B cell (primary cell): ENCODE measurements at regions of chrX and their contacts with region 1.

Region 1: GRCh38 chrX:107776649-107777535 is 641 bp upstream of the NCBP2L start:
- DNase-seq: peak; percentile 85
- ATAC-seq: peak; percentile 70
- H3K4me3 ChIP-seq: peak overlapping the region; percentile 48 to 72 (median 60)
- H3K4me3 Mint-ChIP-seq: peak overlapping the region; percentile 84
- H3K27ac ChIP-seq: peak overlapping the region in 1 of 2 donors; percentile 12
- H3K27ac Mint-ChIP-seq: peak overlapping the region; percentile 79
- H3K4me1 ChIP-seq: peaks cover 14 to 23% of the 10 kb centered on the region in 2 donors
- H3K4me1 Mint-ChIP-seq: peaks cover 21% of the 10 kb centered on the region
- H3K27me3 ChIP-seq: peaks cover 0 to 9% (median 0%) of the 10 kb centered on the region in 4 experiments
- H3K27me3 Mint-ChIP-seq: no peaks in the 10 kb centered on the region
- CTCF ChIP-seq: peak; percentile 63

Region 2: DNA sequence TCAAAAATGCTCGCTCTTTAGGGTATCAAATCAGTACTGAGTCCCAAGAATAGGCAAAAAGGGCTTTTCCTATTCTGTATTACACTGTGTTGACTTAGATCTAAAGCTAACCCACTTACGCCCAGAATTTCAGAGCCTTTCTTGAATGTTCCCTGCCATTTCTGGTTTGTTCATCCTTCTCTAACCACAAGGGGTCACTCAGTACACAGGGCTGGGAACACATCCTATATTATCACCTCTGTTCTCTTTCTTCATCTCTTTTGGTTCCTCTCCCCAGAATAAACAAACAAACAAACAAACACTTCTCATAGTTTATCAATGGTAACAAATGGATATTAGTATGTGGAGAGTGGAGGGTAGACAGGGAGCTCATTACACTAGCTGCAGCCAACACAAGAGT is 751.3 kb before region 1 on chrX:
- CTCF ChIA-PET with region 1: interaction called, 4 read pairs
- POLR2A ChIA-PET with region 1: no interaction called
- intact Hi-C with region 1: loop called (anchors 2 kb)
- DNase-seq: peak; percentile 24
- ATAC-seq: no peak
- H3K4me3 ChIP-seq: no peak overlapping the region
- H3K4me3 Mint-ChIP-seq: no peak overlapping the region
- H3K27ac ChIP-seq: no peak overlapping the region
- H3K27ac Mint-ChIP-seq: no peak overlapping the region
- H3K4me1 ChIP-seq: no peaks in the 10 kb centered on the region
- H3K4me1 Mint-ChIP-seq: no peaks in the 10 kb centered on the region
- H3K27me3 ChIP-seq: no peaks in the 10 kb centered on the region
- H3K27me3 Mint-ChIP-seq: peaks cover 12% of the 10 kb centered on the region
- CTCF ChIP-seq: peak; percentile 28

Region 3: DNA sequence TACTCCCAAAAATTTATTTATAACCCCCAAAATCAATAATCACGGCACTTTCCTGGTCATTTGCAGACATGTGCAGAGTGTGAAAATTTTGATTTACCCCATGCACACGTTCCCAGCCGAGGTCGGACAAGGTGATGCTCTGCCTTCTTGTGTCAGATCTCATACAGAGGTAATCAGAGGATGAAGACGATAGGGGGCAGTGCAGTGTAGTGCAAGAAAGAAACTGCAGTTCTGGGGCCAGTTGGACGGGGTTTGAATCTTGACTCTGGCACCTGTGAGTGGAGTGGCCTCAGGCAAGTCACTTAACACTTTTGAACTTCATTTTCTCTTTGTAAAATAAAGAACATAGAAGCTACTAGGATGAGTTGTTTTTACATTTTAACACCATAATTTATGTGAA is 239.1 kb before region 1 on chrX:
- CTCF ChIA-PET with region 1: interaction called, 3 read pairs
- POLR2A ChIA-PET with region 1: no interaction called
- intact Hi-C with region 1: loop called (anchors 5 kb)
- DNase-seq: peak; percentile 6
- ATAC-seq: no peak
- H3K4me3 ChIP-seq: no peak overlapping the region
- H3K4me3 Mint-ChIP-seq: no peak overlapping the region
- H3K27ac ChIP-seq: no peak overlapping the region
- H3K27ac Mint-ChIP-seq: no peak overlapping the region
- H3K4me1 ChIP-seq: no peaks in the 10 kb centered on the region
- H3K4me1 Mint-ChIP-seq: peaks cover 5% of the 10 kb centered on the region
- H3K27me3 ChIP-seq: no peaks in the 10 kb centered on the region
- H3K27me3 Mint-ChIP-seq: no peaks in the 10 kb centered on the region
- CTCF ChIP-seq: no peak

Region 4: DNA sequence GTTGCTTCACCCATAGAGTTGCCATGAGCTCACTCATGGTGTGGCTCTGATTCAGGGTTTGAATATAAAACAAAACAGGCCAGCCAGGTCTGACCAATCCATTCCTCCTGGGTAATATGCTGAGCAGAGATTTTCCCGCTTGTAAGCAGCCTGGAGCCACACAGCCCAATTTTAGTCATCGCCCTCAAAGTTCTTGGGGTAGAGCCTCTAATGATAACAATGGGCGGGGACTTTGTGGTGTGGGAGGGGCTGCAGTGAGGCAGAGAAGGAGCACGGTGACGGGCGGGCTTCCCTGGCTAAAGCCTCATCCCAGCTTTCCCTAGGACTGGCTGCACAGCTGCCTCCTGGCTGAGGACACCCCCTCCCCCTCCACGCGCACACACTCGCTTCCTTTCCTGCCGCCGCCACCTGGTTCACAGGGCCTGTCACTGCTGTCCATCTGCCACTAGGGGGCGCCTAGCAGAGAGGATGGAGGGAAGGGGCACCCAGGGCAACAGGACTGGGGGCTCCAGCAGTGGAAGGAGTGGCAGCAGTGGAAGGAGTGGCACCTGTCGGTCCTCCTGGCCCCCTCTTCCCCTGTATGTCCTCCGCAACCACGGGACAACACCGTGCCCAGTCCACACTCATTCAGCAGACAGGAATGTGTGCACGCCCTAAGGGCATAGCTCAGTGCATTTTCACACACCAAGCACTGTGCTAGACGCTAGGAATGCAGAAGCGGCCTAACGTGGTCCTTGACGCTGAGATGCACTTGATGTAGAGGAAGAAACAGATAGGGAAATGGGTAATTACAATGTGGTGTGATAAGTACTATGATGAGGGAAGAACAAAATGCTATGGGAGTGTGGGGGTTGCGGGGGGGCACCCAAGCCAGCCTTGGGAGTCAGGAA is 121.8 kb before region 1 on chrX:
- CTCF ChIA-PET with region 1: interaction called, 246 read pairs
- POLR2A ChIA-PET with region 1: no interaction called
- intact Hi-C with region 1: loop called (anchors 1 kb)
- DNase-seq: peak; percentile 74
- ATAC-seq: peak; percentile 85
- H3K4me3 ChIP-seq: no peak overlapping the region
- H3K4me3 Mint-ChIP-seq: no peak overlapping the region
- H3K27ac ChIP-seq: no peak overlapping the region
- H3K27ac Mint-ChIP-seq: peak overlapping the region; percentile 26
- H3K4me1 ChIP-seq: peaks cover 7% of the 10 kb centered on the region in 2 donors
- H3K4me1 Mint-ChIP-seq: peaks cover 9% of the 10 kb centered on the region
- H3K27me3 ChIP-seq: no peaks in the 10 kb centered on the region
- H3K27me3 Mint-ChIP-seq: no peaks in the 10 kb centered on the region
- CTCF ChIP-seq: peak; percentile 78

Region 5: GRCh38 chrX:107672955-107673378 is 103.9 kb before region 1 on chrX:
- CTCF ChIA-PET with region 1: interaction called, 102 read pairs
- POLR2A ChIA-PET with region 1: interaction called, 53 read pairs
- intact Hi-C with region 1: loop called (anchors 1 kb)
- DNase-seq: peak; percentile 88
- ATAC-seq: peak; percentile 46
- H3K4me3 ChIP-seq: peak overlapping the region in 2 of 5 experiments; percentile 27 to 53
- H3K4me3 Mint-ChIP-seq: peak overlapping the region; percentile 83
- H3K27ac ChIP-seq: peak overlapping the region; percentile 99 to 100
- H3K27ac Mint-ChIP-seq: peak overlapping the region; percentile 98
- H3K4me1 ChIP-seq: peaks cover 38 to 52% of the 10 kb centered on the region in 2 donors
- H3K4me1 Mint-ChIP-seq: peaks cover 48% of the 10 kb centered on the region
- H3K27me3 ChIP-seq: no peaks in the 10 kb centered on the region
- H3K27me3 Mint-ChIP-seq: no peaks in the 10 kb centered on the region
- CTCF ChIP-seq: peak; percentile 65

Region 6: GRCh38 chrX:107741404-107741790 is 35.5 kb before region 1 on chrX:
- CTCF ChIA-PET with region 1: interaction called, 6 read pairs
- POLR2A ChIA-PET with region 1: interaction called, 5 read pairs
- intact Hi-C with region 1: loop called (anchors 1 kb)
- DNase-seq: no peak
- ATAC-seq: no peak
- H3K4me3 ChIP-seq: peak overlapping the region in 4 of 5 experiments; percentile 5 to 37 (median 18)
- H3K4me3 Mint-ChIP-seq: peak overlapping the region; percentile 88
- H3K27ac ChIP-seq: peak overlapping the region; percentile 62 to 68
- H3K27ac Mint-ChIP-seq: peak overlapping the region; percentile 98
- H3K4me1 ChIP-seq: peaks cover 14 to 19% of the 10 kb centered on the region in 2 donors
- H3K4me1 Mint-ChIP-seq: peaks cover 15% of the 10 kb centered on the region
- H3K27me3 ChIP-seq: no peaks in the 10 kb centered on the region
- H3K27me3 Mint-ChIP-seq: no peaks in the 10 kb centered on the region
- CTCF ChIP-seq: no peak

Region 7: DNA sequence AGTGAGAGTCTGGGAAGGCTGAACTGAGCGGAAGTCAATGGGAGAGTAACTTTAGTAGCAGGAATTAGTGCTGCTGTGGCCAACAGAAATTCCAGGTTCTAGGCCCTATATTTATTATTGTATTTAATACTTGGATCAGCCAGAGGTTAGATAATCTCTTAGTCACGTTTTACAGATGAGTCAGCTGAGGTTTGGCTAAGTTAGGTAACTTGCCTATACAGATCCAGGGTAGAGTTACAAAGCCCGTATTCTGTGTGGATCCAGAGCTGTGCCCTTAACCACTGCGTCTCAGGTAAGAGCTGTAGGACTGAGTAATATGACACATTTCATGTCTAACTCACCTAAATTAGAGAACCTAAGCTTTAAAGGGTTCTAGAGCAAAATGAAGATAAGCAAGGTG is 294.0 kb after region 1 on chrX:
- CTCF ChIA-PET with region 1: no interaction called
- POLR2A ChIA-PET with region 1: no interaction called
- intact Hi-C with region 1: loop called (anchors 1 kb)
- DNase-seq: no peak
- ATAC-seq: no peak
- H3K4me3 ChIP-seq: no peak overlapping the region
- H3K4me3 Mint-ChIP-seq: no peak overlapping the region
- H3K27ac ChIP-seq: no peak overlapping the region
- H3K27ac Mint-ChIP-seq: no peak overlapping the region
- H3K4me1 ChIP-seq: no peaks in the 10 kb centered on the region
- H3K4me1 Mint-ChIP-seq: peaks cover 5% of the 10 kb centered on the region
- H3K27me3 ChIP-seq: no peaks in the 10 kb centered on the region
- H3K27me3 Mint-ChIP-seq: no peaks in the 10 kb centered on the region
- CTCF ChIP-seq: no peak